Heart right ventricle (tissue), 16 donors: ENCODE measurements at regions of chr15 and their contacts with region 1.

Region 1: GRCh38 chr15:58515807-58516206 is 84.0 kb downstream of the LIPC start:
- DNase-seq: no peak
- ATAC-seq: no peak
- H3K4me3 ChIP-seq: no peak overlapping the region
- H3K27ac ChIP-seq: peak overlapping the region in 1 of 10 donors; percentile 55
- H3K4me1 ChIP-seq: peaks cover 0 to 51% (median 15%) of the 10 kb centered on the region in 9 donors
- H3K27me3 ChIP-seq: no peaks in the 10 kb centered on the region
- CTCF ChIP-seq: no peak

Region 2: DNA sequence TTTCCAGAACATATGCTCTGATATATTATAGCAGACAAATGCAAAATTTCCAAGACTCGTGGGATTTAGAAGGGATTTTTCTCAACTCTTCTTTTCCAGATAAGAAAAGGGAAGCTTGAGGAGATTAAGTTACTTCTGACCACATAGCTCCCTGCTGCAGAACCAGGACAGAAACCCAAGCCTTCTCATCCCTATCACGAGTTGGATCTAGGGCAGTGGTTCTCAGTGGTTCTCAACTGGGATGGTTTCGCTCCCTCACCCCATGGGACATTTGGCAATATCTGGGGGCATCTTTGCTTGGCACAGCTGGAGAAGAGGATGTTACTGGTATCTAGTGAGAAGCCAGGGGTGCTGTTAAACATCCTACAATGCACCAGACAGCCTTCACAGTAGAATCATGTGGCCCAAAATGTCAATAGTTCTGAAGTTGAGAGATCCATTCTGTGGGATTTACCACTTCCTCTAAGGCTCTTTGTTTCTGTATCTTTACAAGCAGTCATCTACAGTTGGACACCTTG is 19.9 kb before region 1 on chr15:
- intact Hi-C with region 1: loop called in 1 of 10 experiments (anchors 2 kb)
- DNase-seq: no peak
- ATAC-seq: no peak
- H3K4me3 ChIP-seq: no peak overlapping the region
- H3K27ac ChIP-seq: no peak overlapping the region
- H3K4me1 ChIP-seq: peaks cover 0 to 8% (median 0%) of the 10 kb centered on the region in 9 donors
- H3K27me3 ChIP-seq: no peaks in the 10 kb centered on the region
- CTCF ChIP-seq: no peak